Mammary epithelial cell (primary cell): ENCODE measurements at regions of chr7 and their contacts with region 1.

Region 1: DNA sequence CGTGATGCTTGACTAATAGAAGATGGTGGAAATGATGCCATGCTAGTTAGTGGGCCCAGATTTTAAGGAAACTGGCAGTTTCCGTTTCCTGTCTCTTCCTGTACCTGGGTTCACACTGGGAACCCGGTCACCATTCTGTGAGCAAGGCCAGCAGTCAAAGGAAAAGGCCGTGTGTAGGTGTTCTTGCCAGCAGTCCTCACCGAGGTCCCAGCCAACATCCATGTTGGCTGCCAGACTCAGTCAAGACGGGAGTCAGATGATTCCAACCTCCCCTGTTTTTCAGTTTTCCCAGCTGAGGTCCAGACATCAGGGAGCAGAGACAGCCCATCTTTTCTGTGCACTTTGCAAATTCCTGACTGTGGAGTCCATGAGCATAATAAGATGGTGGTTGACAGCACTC is 15.2 kb upstream of the PILRB start:
- DNase-seq: no peak
- H3K4me3 ChIP-seq: no peak overlapping the region
- H3K27ac ChIP-seq: no peak overlapping the region
- H3K4me1 ChIP-seq: peaks cover 20% of the 10 kb centered on the region
- H3K27me3 ChIP-seq: no peaks in the 10 kb centered on the region
- CTCF ChIP-seq: no peak

Region 2: GRCh38 chr7:100271716-100272537 is 70.8 kb before region 1 on chr7:
- CTCF ChIA-PET with region 1: no interaction called
- dilution Hi-C with region 1: no loop called
- in situ Hi-C with region 1: no loop called
- intact Hi-C with region 1: loop called (anchors 10 kb)
- DNase-seq: peak; percentile 91
- H3K4me3 ChIP-seq: peak overlapping the region; percentile 36 to 62 (median 61)
- H3K27ac ChIP-seq: no peak overlapping the region
- H3K4me1 ChIP-seq: peaks cover 3% of the 10 kb centered on the region
- H3K27me3 ChIP-seq: no peaks in the 10 kb centered on the region
- CTCF ChIP-seq: peak; percentile 12 to 51

Region 3: GRCh38 chr7:100446040-100446439 is 103.3 kb after region 1 on chr7:
- CTCF ChIA-PET with region 1: no interaction called
- dilution Hi-C with region 1: no loop called
- in situ Hi-C with region 1: no loop called
- intact Hi-C with region 1: no loop called
- DNase-seq: no peak
- H3K4me3 ChIP-seq: no peak overlapping the region
- H3K27ac ChIP-seq: no peak overlapping the region
- H3K4me1 ChIP-seq: no peaks in the 10 kb centered on the region
- H3K27me3 ChIP-seq: no peaks in the 10 kb centered on the region
- CTCF ChIP-seq: no peak

Region 4: GRCh38 chr7:100538654-100539435 is 196.1 kb after region 1 on chr7 and contains the start of gene AGFG2:
- CTCF ChIA-PET with region 1: no interaction called
- dilution Hi-C with region 1: no loop called
- in situ Hi-C with region 1: no loop called
- intact Hi-C with region 1: no loop called
- DNase-seq: peak; percentile 100
- H3K4me3 ChIP-seq: peak within 1 kb of the TSS; percentile 60 to 72 (median 66)
- H3K27ac ChIP-seq: no peak within 1 kb of the TSS
- H3K4me1 ChIP-seq: peaks cover 7% of the 10 kb centered on the region
- H3K27me3 ChIP-seq: no peaks in the 10 kb centered on the region
- CTCF ChIP-seq: no peak
- total RNA-seq, gene AGFG2: 8.0 to 10.9 TPM

Region 5: DNA sequence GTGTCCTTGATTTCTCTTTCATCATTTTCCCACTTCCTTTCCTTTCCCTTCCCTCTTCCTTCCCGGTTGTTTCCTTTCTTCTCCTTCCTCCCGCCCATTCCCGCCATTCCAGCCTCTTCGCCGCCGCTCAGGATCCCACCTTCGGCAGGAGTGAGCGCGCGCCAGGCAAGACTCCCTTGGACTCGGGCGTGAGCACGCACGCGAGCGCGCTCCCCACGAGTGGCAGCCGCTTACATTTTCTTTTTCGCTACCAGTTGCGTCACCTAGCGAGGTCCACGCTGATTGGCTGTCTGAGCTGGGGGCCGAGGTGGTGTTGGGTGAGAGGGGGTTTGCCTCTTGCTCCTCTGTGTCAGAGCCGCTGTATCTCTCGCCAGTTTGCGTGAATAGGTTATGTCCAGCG is 402.4 kb after region 1 on chr7:
- CTCF ChIA-PET with region 1: no interaction called
- dilution Hi-C with region 1: no loop called
- in situ Hi-C with region 1: no loop called
- intact Hi-C with region 1: no loop called
- DNase-seq: peak; percentile 17
- H3K4me3 ChIP-seq: peak overlapping the region in 2 of 3 experiments; percentile 19 to 35
- H3K27ac ChIP-seq: no peak overlapping the region
- H3K4me1 ChIP-seq: no peaks in the 10 kb centered on the region
- H3K27me3 ChIP-seq: no peaks in the 10 kb centered on the region
- CTCF ChIP-seq: no peak